SK-N-SH (cell line): ENCODE measurements at regions of chr14 and their contacts with region 1.

Region 1: GRCh38 chr14:23631702-23632460 is 4.3 kb upstream of the DHRS2 start:
- DNase-seq: peak; percentile 79
- H3K4me3 ChIP-seq: no peak overlapping the region; a peak in 1 of 4 replicates
- H3K27ac ChIP-seq: no peak overlapping the region; a peak in 1 of 4 replicates
- H3K4me1 ChIP-seq: peaks cover 0 to 12% of the 10 kb centered on the region in 2 experiments; a peak in 1 of 4 replicates
- H3K27me3 ChIP-seq: no peaks in the 10 kb centered on the region
- CTCF ChIP-seq: peak; percentile 93
- EP300 ChIP-seq: no peak
- RAD21 ChIP-seq: peak; percentile 81

Region 2: GRCh38 chr14:23610090-23610814 is 21.6 kb before region 1 on chr14:
- CTCF ChIA-PET with region 1: interaction called, 38 read pairs
- POLR2A ChIA-PET with region 1: no interaction called
- DNase-seq: no peak
- H3K4me3 ChIP-seq: no peak overlapping the region
- H3K27ac ChIP-seq: no peak overlapping the region
- H3K4me1 ChIP-seq: no peaks in the 10 kb centered on the region
- H3K27me3 ChIP-seq: peaks cover 8% of the 10 kb centered on the region; the same call in 1 of the 2 replicates
- CTCF ChIP-seq: no peak
- EP300 ChIP-seq: no peak
- RAD21 ChIP-seq: no peak

Region 3: GRCh38 chr14:23621204-23621931 is 10.5 kb before region 1 on chr14:
- CTCF ChIA-PET with region 1: interaction called, 17 read pairs
- POLR2A ChIA-PET with region 1: no interaction called
- DNase-seq: no peak
- H3K4me3 ChIP-seq: no peak overlapping the region
- H3K27ac ChIP-seq: no peak overlapping the region
- H3K4me1 ChIP-seq: no peaks in the 10 kb centered on the region
- H3K27me3 ChIP-seq: no peaks in the 10 kb centered on the region
- CTCF ChIP-seq: no peak
- EP300 ChIP-seq: no peak
- RAD21 ChIP-seq: no peak

Region 4: GRCh38 chr14:23653066-23653465 is 21.2 kb after region 1 on chr14:
- CTCF ChIA-PET with region 1: interaction called, 21 read pairs
- POLR2A ChIA-PET with region 1: no interaction called
- DNase-seq: no peak
- H3K4me3 ChIP-seq: no peak overlapping the region
- H3K27ac ChIP-seq: no peak overlapping the region
- H3K4me1 ChIP-seq: no peaks in the 10 kb centered on the region; a peak in 1 of 4 replicates
- H3K27me3 ChIP-seq: no peaks in the 10 kb centered on the region; the same call in 1 of the 2 replicates
- CTCF ChIP-seq: no peak
- EP300 ChIP-seq: no peak
- RAD21 ChIP-seq: no peak

Region 5: DNA sequence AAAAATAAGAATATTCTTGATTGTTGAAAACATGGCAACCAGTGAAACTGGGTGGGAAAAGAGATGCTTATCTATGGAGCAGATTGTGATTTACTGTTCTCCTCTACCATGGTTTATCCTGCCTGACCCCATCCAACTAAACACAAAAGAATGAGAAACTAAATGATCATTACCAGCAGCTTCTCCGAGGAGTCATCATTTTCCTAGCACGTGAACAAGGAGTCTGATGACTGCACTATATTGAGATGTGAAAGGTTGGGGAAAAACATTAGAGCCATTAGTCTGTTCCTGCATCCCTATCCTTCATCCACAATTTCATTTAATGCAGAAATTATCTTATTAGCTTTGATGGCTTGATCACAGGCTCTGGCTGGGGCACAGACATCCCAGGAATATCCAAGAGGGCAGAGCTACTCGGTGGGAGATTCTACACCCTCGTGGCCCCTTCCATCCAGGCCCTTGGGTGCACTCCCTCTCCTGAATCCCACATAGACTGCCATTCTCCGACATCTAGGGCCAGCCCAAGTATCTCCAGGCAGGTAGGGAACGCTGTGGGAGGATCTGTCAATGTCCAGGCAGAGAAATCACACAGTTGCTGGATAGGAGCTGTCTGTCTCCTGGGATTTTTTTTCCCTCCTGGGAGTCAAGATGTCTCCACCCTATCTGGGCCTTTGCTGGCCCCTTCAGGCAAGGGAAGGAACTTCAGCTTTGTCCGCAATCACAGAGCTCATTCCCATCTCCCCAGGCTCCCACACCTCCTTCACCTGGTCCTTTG is 278.4 kb after region 1 on chr14:
- CTCF ChIA-PET with region 1: interaction called, 65 read pairs
- POLR2A ChIA-PET with region 1: no interaction called
- DNase-seq: peak; percentile 73
- H3K4me3 ChIP-seq: no peak overlapping the region
- H3K27ac ChIP-seq: no peak overlapping the region
- H3K4me1 ChIP-seq: peaks cover 0 to 2% of the 10 kb centered on the region in 2 experiments; a peak in 1 of 4 replicates
- H3K27me3 ChIP-seq: no peaks in the 10 kb centered on the region
- CTCF ChIP-seq: peak; percentile 76
- EP300 ChIP-seq: no peak
- RAD21 ChIP-seq: peak; percentile 82

Region 6: DNA sequence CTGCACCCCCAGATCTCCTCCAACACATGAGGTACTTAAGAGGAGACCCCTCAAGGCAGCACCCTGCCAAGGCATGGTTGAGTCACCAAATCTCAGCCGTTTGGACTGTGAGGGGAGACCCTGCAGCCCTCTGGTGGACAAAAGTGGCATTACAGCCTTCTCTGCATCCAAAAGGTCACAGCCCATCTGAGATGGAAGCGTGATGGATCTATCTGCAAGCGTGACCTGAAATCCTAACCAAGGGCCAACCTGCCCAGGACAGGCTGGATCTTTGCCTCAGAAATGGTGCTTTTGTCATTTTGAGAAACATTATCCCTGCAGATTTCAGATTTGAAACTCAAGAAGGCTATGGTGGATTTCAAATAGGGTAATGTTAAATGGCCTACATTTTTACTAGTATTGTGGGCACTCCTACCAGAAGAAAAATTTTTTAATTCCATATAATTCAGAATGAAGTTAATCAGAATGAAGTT is 298.0 kb after region 1 on chr14:
- CTCF ChIA-PET with region 1: interaction called, 40 read pairs
- POLR2A ChIA-PET with region 1: no interaction called
- DNase-seq: peak; percentile 81
- H3K4me3 ChIP-seq: no peak overlapping the region; a peak in 1 of 4 replicates
- H3K27ac ChIP-seq: no peak overlapping the region; a peak in 1 of 4 replicates
- H3K4me1 ChIP-seq: no peaks in the 10 kb centered on the region; a peak in 1 of 4 replicates
- H3K27me3 ChIP-seq: no peaks in the 10 kb centered on the region
- CTCF ChIP-seq: peak; percentile 81
- EP300 ChIP-seq: no peak
- RAD21 ChIP-seq: peak; percentile 73